Endothelial cell of umbilical vein (primary cell): ENCODE measurements at regions of chr11 and their contacts with region 1.

Region 1: GRCh38 chr11:114080219-114080618 is 20.7 kb downstream of the ZBTB16 start:
- DNase-seq: peak; percentile 80
- H3K4me3 ChIP-seq: no peak overlapping the region
- H3K27ac ChIP-seq: peak overlapping the region; percentile 94
- H3K4me1 ChIP-seq: peaks cover 38% of the 10 kb centered on the region
- H3K27me3 ChIP-seq: no peaks in the 10 kb centered on the region
- CTCF ChIP-seq: no peak
- POLR2A ChIP-seq: no peak

Region 2: GRCh38 chr11:114091516-114092397 is 11.5 kb after region 1 on chr11:
- CTCF ChIA-PET with region 1: interaction called, 4 read pairs
- POLR2A ChIA-PET with region 1: no interaction called
- dilution Hi-C with region 1: no loop called
- intact Hi-C with region 1: loop called (anchors 1 kb)
- DNase-seq: peak; percentile 41
- H3K4me3 ChIP-seq: no peak overlapping the region
- H3K27ac ChIP-seq: peak overlapping the region; percentile 62
- H3K4me1 ChIP-seq: peaks cover 29% of the 10 kb centered on the region
- H3K27me3 ChIP-seq: no peaks in the 10 kb centered on the region
- CTCF ChIP-seq: no peak
- POLR2A ChIP-seq: no peak

Region 3: GRCh38 chr11:114110952-114111947 is 31.0 kb after region 1 on chr11:
- CTCF ChIA-PET with region 1: no interaction called
- POLR2A ChIA-PET with region 1: no interaction called
- dilution Hi-C with region 1: no loop called
- intact Hi-C with region 1: loop called (anchors 1 kb)
- DNase-seq: peak; percentile 75
- H3K4me3 ChIP-seq: peak overlapping the region in 1 of 3 experiments; percentile 32
- H3K27ac ChIP-seq: peak overlapping the region; percentile 25
- H3K4me1 ChIP-seq: peaks cover 20% of the 10 kb centered on the region
- H3K27me3 ChIP-seq: peaks cover 2% of the 10 kb centered on the region in 2 experiments
- CTCF ChIP-seq: no peak
- POLR2A ChIP-seq: no peak

Region 4: DNA sequence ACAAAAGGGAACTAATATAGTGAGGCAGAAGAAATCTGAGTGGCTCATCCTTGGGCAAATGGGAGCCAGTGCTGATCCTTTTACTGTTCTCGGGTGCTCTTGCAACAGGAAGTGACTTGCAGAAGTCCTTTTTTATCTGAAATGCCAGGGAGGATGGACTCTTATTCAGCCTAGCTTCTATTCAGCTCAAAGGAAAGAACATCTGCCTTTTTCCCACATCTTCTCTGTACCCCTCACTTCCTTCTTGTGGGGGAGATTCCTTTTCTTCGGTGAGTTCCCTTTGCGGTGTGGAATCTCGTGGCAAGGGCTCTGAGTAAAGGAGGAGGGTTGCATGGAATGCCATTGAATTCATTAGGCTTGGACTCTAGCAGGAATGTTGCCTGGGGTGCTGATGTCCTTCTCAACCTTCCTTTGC is 55.5 kb after region 1 on chr11:
- CTCF ChIA-PET with region 1: no interaction called
- POLR2A ChIA-PET with region 1: no interaction called
- dilution Hi-C with region 1: no loop called
- intact Hi-C with region 1: loop called (anchors 2 kb)
- DNase-seq: no peak
- H3K4me3 ChIP-seq: no peak overlapping the region
- H3K27ac ChIP-seq: no peak overlapping the region
- H3K4me1 ChIP-seq: peaks cover 42% of the 10 kb centered on the region
- H3K27me3 ChIP-seq: no peaks in the 10 kb centered on the region
- CTCF ChIP-seq: no peak
- POLR2A ChIP-seq: no peak

Region 5: GRCh38 chr11:114252767-114253166 is 172.5 kb after region 1 on chr11:
- CTCF ChIA-PET with region 1: no interaction called
- POLR2A ChIA-PET with region 1: no interaction called
- dilution Hi-C with region 1: no loop called
- intact Hi-C with region 1: no loop called
- DNase-seq: no peak
- H3K4me3 ChIP-seq: no peak overlapping the region
- H3K27ac ChIP-seq: no peak overlapping the region
- H3K4me1 ChIP-seq: no peaks in the 10 kb centered on the region
- H3K27me3 ChIP-seq: no peaks in the 10 kb centered on the region
- CTCF ChIP-seq: no peak
- POLR2A ChIP-seq: no peak